Esophagus muscularis mucosa (tissue), 4 donors: ENCODE measurements at regions of chr22 and their contacts with region 1.

Region 1: GRCh38 chr22:42343551-42344081 is 73.2 kb upstream of the TCF20 start:
- DNase-seq: no peak
- H3K4me3 ChIP-seq: peak overlapping the region; percentile 54 to 68 (median 58)
- H3K27ac ChIP-seq: peak overlapping the region; percentile 80 to 89 (median 83)
- H3K4me1 ChIP-seq: peaks cover 4 to 49% (median 42%) of the 10 kb centered on the region in 4 donors
- H3K27me3 ChIP-seq: no peaks in the 10 kb centered on the region
- CTCF ChIP-seq: no peak
- EP300 ChIP-seq: no peak
- POLR2A ChIP-seq: no peak

Region 2: GRCh38 chr22:42369245-42370041 is 25.8 kb after region 1 on chr22:
- intact Hi-C with region 1: loop called (anchors 2 kb)
- DNase-seq: peak; percentile 97
- H3K4me3 ChIP-seq: peak overlapping the region; percentile 64 to 71 (median 70)
- H3K27ac ChIP-seq: peak overlapping the region; percentile 36 to 76 (median 58)
- H3K4me1 ChIP-seq: peaks cover 44 to 54% (median 52%) of the 10 kb centered on the region in 4 donors
- H3K27me3 ChIP-seq: peaks cover 0 to 4% (median 0%) of the 10 kb centered on the region in 4 donors
- CTCF ChIP-seq: no peak
- EP300 ChIP-seq: no peak
- POLR2A ChIP-seq: no peak

Region 3: DNA sequence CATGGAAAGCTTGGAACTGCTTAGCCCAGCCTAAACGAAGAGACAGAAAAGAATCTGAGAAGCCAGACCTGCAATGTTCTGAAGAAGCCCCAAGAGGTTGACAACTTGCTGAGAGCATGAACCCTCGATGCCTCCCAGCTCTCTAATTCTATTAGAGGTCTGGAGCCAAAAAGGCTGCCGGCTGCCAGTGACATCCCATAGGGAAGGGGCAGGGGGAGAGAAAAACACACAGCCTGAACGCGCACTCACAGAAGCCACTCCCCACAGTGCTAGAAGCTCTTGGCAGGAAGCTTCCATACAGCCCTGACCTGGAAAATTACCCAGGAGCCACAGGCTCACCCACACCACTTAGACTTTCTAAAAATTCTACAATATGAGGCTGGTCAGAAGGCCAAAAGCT is 252.7 kb after region 1 on chr22:
- intact Hi-C with region 1: no loop called
- DNase-seq: no peak
- H3K4me3 ChIP-seq: no peak overlapping the region
- H3K27ac ChIP-seq: peak overlapping the region in 2 of 4 donors; percentile 37 to 46
- H3K4me1 ChIP-seq: peaks cover 0 to 28% (median 21%) of the 10 kb centered on the region in 4 donors
- H3K27me3 ChIP-seq: no peaks in the 10 kb centered on the region
- CTCF ChIP-seq: no peak
- EP300 ChIP-seq: no peak
- POLR2A ChIP-seq: no peak